Natural killer cell (primary cell): ENCODE measurements at regions of chr11 and their contacts with region 1.

Region 1: GRCh38 chr11:73965076-73965860 is 14.4 kb downstream of the DNAJB13 start:
- DNase-seq: peak in 1 of 2 donors; percentile 12
- ATAC-seq: no peak
- H3K4me3 ChIP-seq: no peak overlapping the region
- H3K4me3 Mint-ChIP-seq: no peak overlapping the region
- H3K27ac ChIP-seq: no peak overlapping the region
- H3K27ac Mint-ChIP-seq: no peak overlapping the region
- H3K4me1 ChIP-seq: peaks cover 36% of the 10 kb centered on the region
- H3K4me1 Mint-ChIP-seq: peaks cover 25 to 30% of the 10 kb centered on the region in 2 donors
- H3K27me3 ChIP-seq: no peaks in the 10 kb centered on the region
- H3K27me3 Mint-ChIP-seq: no peaks in the 10 kb centered on the region
- CTCF ChIP-seq: no peak

Region 2: DNA sequence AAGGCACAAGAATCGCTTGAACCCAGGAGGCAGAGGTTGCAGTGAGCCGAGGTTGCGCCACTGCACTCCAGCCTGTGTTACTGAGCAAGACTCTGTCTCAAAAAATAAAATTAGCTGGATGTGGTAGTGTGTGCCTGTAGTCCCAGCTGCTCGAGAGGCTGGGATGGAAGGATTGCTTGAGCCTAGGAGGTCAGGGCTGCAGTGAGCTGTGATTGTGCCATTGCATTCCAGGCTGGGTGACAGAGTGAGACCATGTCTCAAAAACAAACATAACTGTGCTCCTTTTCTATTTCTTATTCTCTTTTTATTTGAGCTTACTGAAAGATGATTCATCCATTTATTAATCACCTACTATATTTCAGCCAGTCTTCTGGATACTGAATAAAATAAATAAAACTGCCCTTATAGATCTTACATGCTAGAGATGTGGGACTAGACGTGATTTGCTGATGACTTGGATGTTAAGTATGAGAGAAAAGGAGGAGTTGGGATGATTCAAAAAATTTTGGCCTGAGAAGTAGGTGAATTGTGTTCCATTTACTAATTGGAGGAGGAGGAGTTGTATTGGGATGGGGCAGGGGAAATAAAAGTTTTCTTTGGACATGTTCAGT is 70.4 kb before region 1 on chr11:
- intact Hi-C with region 1: no loop called
- DNase-seq: no peak
- ATAC-seq: no peak
- H3K4me3 ChIP-seq: no peak overlapping the region
- H3K4me3 Mint-ChIP-seq: no peak overlapping the region
- H3K27ac ChIP-seq: no peak overlapping the region
- H3K27ac Mint-ChIP-seq: no peak overlapping the region
- H3K4me1 ChIP-seq: no peaks in the 10 kb centered on the region
- H3K4me1 Mint-ChIP-seq: no peaks in the 10 kb centered on the region
- H3K27me3 ChIP-seq: no peaks in the 10 kb centered on the region
- H3K27me3 Mint-ChIP-seq: no peaks in the 10 kb centered on the region
- CTCF ChIP-seq: no peak

Region 3: GRCh38 chr11:73931039-73931645 is 34.1 kb before region 1 on chr11:
- intact Hi-C with region 1: no loop called
- DNase-seq: peak in 1 of 2 donors; percentile 31
- ATAC-seq: no peak
- H3K4me3 ChIP-seq: no peak overlapping the region
- H3K4me3 Mint-ChIP-seq: no peak overlapping the region
- H3K27ac ChIP-seq: no peak overlapping the region
- H3K27ac Mint-ChIP-seq: no peak overlapping the region
- H3K4me1 ChIP-seq: no peaks in the 10 kb centered on the region
- H3K4me1 Mint-ChIP-seq: no peaks in the 10 kb centered on the region
- H3K27me3 ChIP-seq: no peaks in the 10 kb centered on the region
- H3K27me3 Mint-ChIP-seq: no peaks in the 10 kb centered on the region
- CTCF ChIP-seq: no peak

Region 4: GRCh38 chr11:74004759-74005615 is 39.7 kb after region 1 on chr11:
- intact Hi-C with region 1: loop called (anchors 2 kb)
- DNase-seq: peak; percentile 70 to 95
- ATAC-seq: peak; percentile 93 to 97 (median 93)
- H3K4me3 ChIP-seq: no peak overlapping the region
- H3K4me3 Mint-ChIP-seq: peak overlapping the region; percentile 86
- H3K27ac ChIP-seq: peak overlapping the region; percentile 76
- H3K27ac Mint-ChIP-seq: peak overlapping the region; percentile 91 to 93
- H3K4me1 ChIP-seq: peaks cover 77% of the 10 kb centered on the region
- H3K4me1 Mint-ChIP-seq: peaks cover 72 to 81% of the 10 kb centered on the region in 2 donors
- H3K27me3 ChIP-seq: no peaks in the 10 kb centered on the region
- H3K27me3 Mint-ChIP-seq: no peaks in the 10 kb centered on the region
- CTCF ChIP-seq: no peak

Region 5: GRCh38 chr11:74033046-74033445 is 67.8 kb after region 1 on chr11:
- intact Hi-C with region 1: loop called (anchors 1 kb)
- DNase-seq: peak in 1 of 2 donors; percentile 70
- ATAC-seq: no peak
- H3K4me3 ChIP-seq: no peak overlapping the region
- H3K4me3 Mint-ChIP-seq: no peak overlapping the region
- H3K27ac ChIP-seq: no peak overlapping the region
- H3K27ac Mint-ChIP-seq: peak overlapping the region in 1 of 2 donors; percentile 25
- H3K4me1 ChIP-seq: peaks cover 20% of the 10 kb centered on the region
- H3K4me1 Mint-ChIP-seq: peaks cover 27 to 29% of the 10 kb centered on the region in 2 donors
- H3K27me3 ChIP-seq: no peaks in the 10 kb centered on the region
- H3K27me3 Mint-ChIP-seq: no peaks in the 10 kb centered on the region
- CTCF ChIP-seq: no peak

Region 6: GRCh38 chr11:74090701-74091100 is 125.4 kb after region 1 on chr11:
- intact Hi-C with region 1: loop called (anchors 5 kb)
- DNase-seq: peak in 1 of 2 donors; percentile 44
- ATAC-seq: no peak
- H3K4me3 ChIP-seq: no peak overlapping the region
- H3K4me3 Mint-ChIP-seq: no peak overlapping the region
- H3K27ac ChIP-seq: no peak overlapping the region
- H3K27ac Mint-ChIP-seq: no peak overlapping the region
- H3K4me1 ChIP-seq: no peaks in the 10 kb centered on the region
- H3K4me1 Mint-ChIP-seq: no peaks in the 10 kb centered on the region
- H3K27me3 ChIP-seq: no peaks in the 10 kb centered on the region
- H3K27me3 Mint-ChIP-seq: no peaks in the 10 kb centered on the region
- CTCF ChIP-seq: no peak

Region 7: GRCh38 chr11:74179234-74180052 is 214.2 kb after region 1 on chr11:
- intact Hi-C with region 1: no loop called
- DNase-seq: no peak
- ATAC-seq: no peak
- H3K4me3 ChIP-seq: no peak overlapping the region
- H3K4me3 Mint-ChIP-seq: no peak overlapping the region
- H3K27ac ChIP-seq: no peak overlapping the region
- H3K27ac Mint-ChIP-seq: no peak overlapping the region
- H3K4me1 ChIP-seq: no peaks in the 10 kb centered on the region
- H3K4me1 Mint-ChIP-seq: peaks cover 5 to 10% of the 10 kb centered on the region in 2 donors
- H3K27me3 ChIP-seq: no peaks in the 10 kb centered on the region
- H3K27me3 Mint-ChIP-seq: no peaks in the 10 kb centered on the region
- CTCF ChIP-seq: no peak